Psoas muscle (tissue), 8 donors: ENCODE measurements at regions of chr10 and their contacts with region 1.

Region 1: GRCh38 chr10:132223156-132223590 is 36.4 kb downstream of the DPYSL4 start:
- DNase-seq: peak; percentile 81 to 88
- ATAC-seq: peak; percentile 94 to 98 (median 96)
- H3K4me3 ChIP-seq: no peak overlapping the region
- H3K27ac ChIP-seq: no peak overlapping the region
- H3K4me1 ChIP-seq: no peaks in the 10 kb centered on the region
- H3K27me3 ChIP-seq: no peaks in the 10 kb centered on the region
- CTCF ChIP-seq: peak; percentile 91

Region 2: DNA sequence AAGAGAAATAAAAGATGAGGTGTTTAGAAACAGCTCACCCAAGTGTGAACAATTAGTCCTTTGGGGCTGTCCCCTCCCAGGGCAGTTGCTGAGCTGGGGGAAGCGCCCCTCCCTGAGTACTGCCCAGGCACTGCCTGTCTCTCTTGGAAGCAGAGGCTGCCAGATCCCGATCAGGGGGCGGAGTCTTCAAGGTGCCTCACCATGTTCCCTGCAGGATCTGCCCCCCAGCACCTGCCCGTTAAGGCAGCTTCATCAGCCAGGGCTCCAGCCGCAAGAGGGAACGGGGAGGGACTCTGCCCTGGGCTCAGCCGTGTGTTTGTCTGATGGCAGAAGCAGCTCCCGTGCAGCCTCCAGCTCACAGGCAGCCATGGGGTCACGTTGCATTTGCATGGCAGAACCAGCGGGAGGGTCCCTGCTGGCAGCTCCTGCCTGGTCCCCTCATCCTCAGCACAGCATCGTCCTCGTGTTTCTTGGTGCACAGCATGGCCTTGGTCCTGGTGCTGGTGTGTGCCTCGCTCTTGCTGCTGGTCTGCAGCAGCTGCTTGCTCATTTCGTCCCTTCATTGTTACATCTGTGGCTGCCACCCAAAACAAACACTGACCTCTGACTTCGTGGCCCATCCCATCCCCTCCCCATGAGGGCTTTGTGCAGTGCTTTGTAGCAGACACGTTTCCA is 47.1 kb before region 1 on chr10:
- intact Hi-C with region 1: no loop called
- DNase-seq: peak; percentile 6 to 37
- ATAC-seq: no peak
- H3K4me3 ChIP-seq: no peak overlapping the region
- H3K27ac ChIP-seq: no peak overlapping the region
- H3K4me1 ChIP-seq: no peaks in the 10 kb centered on the region
- H3K27me3 ChIP-seq: peaks cover 0 to 9% (median 2%) of the 10 kb centered on the region in 3 donors
- CTCF ChIP-seq: no peak

Region 3: DNA sequence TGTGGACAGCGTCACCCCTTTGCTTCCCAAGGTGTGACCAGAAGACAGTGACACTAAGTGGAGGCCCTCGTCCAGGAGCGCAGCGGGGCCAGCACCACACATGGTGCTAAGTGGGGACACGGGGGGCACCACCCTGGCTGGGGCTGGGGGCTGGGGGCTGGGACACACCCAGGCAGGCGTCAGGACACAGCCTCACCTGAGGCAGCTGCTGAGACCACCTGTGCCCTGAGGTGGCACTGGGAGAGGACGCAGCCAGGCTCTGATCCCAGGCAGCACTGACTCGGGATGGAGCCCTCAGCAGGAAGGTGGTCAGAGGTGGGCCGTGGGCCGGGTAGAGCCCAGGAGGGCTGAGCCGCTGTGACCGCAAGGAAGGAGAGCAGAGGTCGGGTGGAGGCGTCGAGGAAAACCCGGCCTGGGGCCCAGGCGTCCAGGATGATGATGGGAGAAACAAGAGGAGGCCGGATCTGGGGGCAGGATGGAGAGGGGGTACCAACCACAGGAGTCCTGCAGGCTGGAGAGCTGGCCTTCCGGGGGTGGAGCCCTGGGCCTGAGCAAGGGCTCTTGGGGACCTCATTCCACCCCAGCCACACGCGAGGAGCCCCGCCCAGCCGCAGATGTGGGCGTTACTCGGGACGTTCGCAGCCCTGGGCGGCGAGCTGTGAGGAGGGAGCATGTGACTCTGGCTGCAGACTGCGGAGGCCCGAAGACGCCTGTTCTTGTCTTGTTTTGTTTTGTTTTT is 131.4 kb after region 1 on chr10:
- intact Hi-C with region 1: loop called (anchors 1 to 2 kb)
- DNase-seq: no peak
- ATAC-seq: no peak
- H3K4me3 ChIP-seq: no peak overlapping the region
- H3K27ac ChIP-seq: no peak overlapping the region
- H3K4me1 ChIP-seq: no peaks in the 10 kb centered on the region
- H3K27me3 ChIP-seq: no peaks in the 10 kb centered on the region
- CTCF ChIP-seq: no peak

Region 4: DNA sequence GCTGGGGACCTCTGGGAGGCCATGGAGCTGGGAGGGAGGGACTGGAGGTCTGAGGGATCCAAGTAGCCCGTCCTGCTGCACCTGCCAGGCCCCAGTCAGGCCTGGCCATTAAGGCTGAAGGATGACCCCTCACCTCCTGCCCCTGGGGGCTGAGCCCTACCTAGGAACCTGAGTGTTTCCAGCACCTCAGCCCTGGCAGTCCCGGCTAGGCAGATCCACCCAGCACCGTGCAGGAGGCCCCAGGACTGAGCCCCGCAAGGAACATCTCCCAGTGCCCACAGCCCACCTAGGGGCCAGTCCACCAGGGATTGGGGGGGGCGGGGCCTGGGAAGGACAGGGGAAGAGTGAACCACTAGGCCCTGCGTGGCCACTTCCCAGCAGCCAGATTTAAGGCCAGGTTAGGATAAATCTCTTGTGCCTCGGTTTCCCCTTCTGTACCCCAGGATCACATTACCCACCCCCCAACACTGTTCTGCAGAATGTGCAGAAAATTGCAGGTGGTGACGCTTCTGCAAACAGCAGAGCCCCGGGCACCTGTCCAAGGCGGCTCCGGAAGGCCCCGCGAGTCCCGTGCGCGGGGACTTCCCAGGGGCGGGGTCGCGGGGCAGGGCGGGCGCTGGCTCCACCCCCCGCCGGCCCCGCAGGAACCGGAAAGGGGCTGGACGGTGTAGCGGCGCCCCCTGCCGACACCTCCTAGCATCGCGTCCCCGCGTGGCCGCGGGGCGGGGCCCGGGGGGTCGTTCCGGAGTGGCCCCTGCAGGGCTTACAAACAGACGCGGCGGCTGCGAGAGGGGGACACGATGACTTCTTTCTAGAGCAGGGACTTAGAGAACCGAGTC is 229.7 kb after region 1 on chr10:
- intact Hi-C with region 1: loop called (anchors 5 kb)
- DNase-seq: peak; percentile 82 to 91
- ATAC-seq: peak; percentile 78 to 84 (median 80)
- H3K4me3 ChIP-seq: peak overlapping the region; percentile 2
- H3K27ac ChIP-seq: peak overlapping the region; percentile 7
- H3K4me1 ChIP-seq: peaks cover 10% of the 10 kb centered on the region
- H3K27me3 ChIP-seq: peaks cover 0 to under 1% (median 0%) of the 10 kb centered on the region in 3 donors
- CTCF ChIP-seq: peak; percentile 97

Region 5: GRCh38 chr10:132643709-132644526 is 420.7 kb after region 1 on chr10:
- intact Hi-C with region 1: loop called in 1 of 2 experiments (anchors 10 kb)
- DNase-seq: peak in 1 of 2 donors; percentile 44
- ATAC-seq: peak in 1 of 4 donors; percentile 11
- H3K4me3 ChIP-seq: no peak overlapping the region
- H3K27ac ChIP-seq: no peak overlapping the region
- H3K4me1 ChIP-seq: no peaks in the 10 kb centered on the region
- H3K27me3 ChIP-seq: no peaks in the 10 kb centered on the region
- CTCF ChIP-seq: no peak

Region 6: GRCh38 chr10:132665946-132666704 is 443.0 kb after region 1 on chr10:
- intact Hi-C with region 1: no loop called
- DNase-seq: no peak
- ATAC-seq: peak in 2 of 4 donors; percentile 36 to 46
- H3K4me3 ChIP-seq: no peak overlapping the region
- H3K27ac ChIP-seq: no peak overlapping the region
- H3K4me1 ChIP-seq: no peaks in the 10 kb centered on the region
- H3K27me3 ChIP-seq: no peaks in the 10 kb centered on the region
- CTCF ChIP-seq: no peak